ENCODE measurements at regions of chr10 and their contacts with region 1.

Region 1: DNA sequence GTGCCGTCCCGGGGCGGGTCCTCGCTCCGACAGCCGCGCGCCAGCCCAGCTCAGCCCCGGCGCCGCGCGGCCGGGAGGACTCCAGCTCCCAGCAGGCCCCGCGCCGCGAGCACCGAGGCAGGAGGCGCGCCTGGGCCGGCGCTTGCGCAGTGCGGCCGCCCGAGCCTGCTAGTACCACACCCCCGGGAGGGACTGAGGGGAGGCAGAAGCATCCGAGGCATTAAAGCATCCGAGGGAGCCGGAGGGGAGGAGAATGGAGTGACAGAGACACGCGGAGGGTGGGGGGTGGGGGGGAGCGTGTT is at the start of gene GRK5:
- DNase-seq: peak; percentile 97
- ATAC-seq: peak; percentile 94 to 95
- total RNA-seq, gene GRK5: 36.4 to 60.1 TPM

Region 2: GRCh38 chr10:119253433-119254174 is 46.3 kb after region 1 on chr10:
- intact Hi-C with region 1: loop called in 1 of 2 experiments (anchors 5 kb)
- DNase-seq: peak; percentile 77
- ATAC-seq: peak; percentile 77 to 87

Region 3: GRCh38 chr10:119270762-119271366 is 63.5 kb after region 1 on chr10:
- intact Hi-C with region 1: loop called in 1 of 2 experiments (anchors 5 kb)
- DNase-seq: peak; percentile 94
- ATAC-seq: peak; percentile 81 to 87

Region 4: GRCh38 chr10:119290291-119291048 is 83.2 kb after region 1 on chr10:
- intact Hi-C with region 1: loop called in 1 of 2 experiments (anchors 5 kb)
- DNase-seq: no peak
- ATAC-seq: no peak

Region 5: GRCh38 chr10:119341459-119342301 is 134.4 kb after region 1 on chr10:
- intact Hi-C with region 1: loop called in 1 of 2 experiments (anchors 2 kb)
- DNase-seq: peak; percentile 77
- ATAC-seq: peak; percentile 84 to 88

Region 6: GRCh38 chr10:119416855-119417254 is 209.5 kb after region 1 on chr10:
- intact Hi-C with region 1: loop called (anchors 2 to 10 kb)
- DNase-seq: peak; percentile 75
- ATAC-seq: peak in 1 of 2 donors; percentile 16

Region 7: DNA sequence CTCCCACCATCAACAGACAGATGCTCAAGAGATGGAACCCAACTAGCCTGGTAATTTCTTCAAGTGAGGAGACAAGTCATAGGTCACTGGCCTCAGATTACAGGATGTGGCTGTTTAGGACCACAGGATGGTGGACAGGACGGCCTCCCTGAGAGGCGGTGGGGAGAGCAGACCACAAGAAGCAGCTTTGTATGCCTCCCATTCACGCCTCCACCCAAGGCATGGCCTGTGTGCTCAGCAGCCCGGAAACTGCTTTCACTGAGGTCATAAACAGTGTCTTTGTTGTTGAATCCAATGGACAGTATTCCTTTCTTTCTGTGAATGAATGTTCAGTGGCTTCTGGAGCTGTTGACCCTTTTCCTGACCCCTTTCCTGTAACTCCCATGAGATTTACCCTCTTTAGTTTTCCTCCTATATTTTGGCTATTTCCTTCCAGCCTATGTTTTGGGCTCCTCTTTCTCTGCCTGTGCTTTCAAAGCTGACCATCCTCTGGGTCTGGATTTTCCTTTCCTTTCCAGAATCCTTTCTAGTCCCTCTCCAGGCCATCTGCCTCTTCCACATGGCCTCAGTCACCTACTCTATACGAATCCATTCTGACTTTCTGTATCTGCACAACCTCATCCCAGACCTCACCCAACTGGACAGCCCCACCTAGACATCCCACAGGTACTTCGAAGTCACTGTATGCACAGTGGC is 486.1 kb after region 1 on chr10:
- intact Hi-C with region 1: no loop called
- DNase-seq: no peak
- ATAC-seq: no peak